B cell (primary cell): ENCODE measurements at regions of chr2 and their contacts with region 1.

Region 1: DNA sequence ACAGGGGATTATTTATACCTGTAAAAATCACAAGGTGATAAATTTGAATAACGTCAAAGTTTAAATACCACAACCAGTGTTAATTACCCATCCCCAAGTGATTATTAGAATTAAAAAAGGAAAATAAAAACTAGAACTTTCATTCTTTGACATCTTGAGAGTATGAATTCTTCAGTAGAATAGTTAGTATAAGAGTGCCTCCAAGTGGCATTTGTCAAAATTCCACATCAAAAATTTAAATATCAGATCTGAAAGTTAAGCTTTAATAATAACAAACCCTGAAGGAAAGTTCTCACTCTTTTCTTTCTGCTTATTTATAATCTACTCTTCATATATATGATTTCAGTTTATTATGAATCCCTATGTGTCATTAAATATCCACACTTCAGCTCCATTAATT is 273.7 kb upstream of the KYNU start:
- DNase-seq: no peak
- ATAC-seq: no peak
- H3K4me3 ChIP-seq: no peak overlapping the region
- H3K4me3 Mint-ChIP-seq: no peak overlapping the region
- H3K27ac ChIP-seq: no peak overlapping the region
- H3K27ac Mint-ChIP-seq: no peak overlapping the region
- H3K4me1 ChIP-seq: no peaks in the 10 kb centered on the region
- H3K4me1 Mint-ChIP-seq: no peaks in the 10 kb centered on the region
- H3K27me3 ChIP-seq: no peaks in the 10 kb centered on the region
- H3K27me3 Mint-ChIP-seq: peaks cover 10% of the 10 kb centered on the region
- CTCF ChIP-seq: no peak

Region 2: GRCh38 chr2:142615876-142616275 is 12.1 kb after region 1 on chr2:
- CTCF ChIA-PET with region 1: no interaction called
- POLR2A ChIA-PET with region 1: no interaction called
- intact Hi-C with region 1: no loop called
- DNase-seq: no peak
- ATAC-seq: no peak
- H3K4me3 ChIP-seq: no peak overlapping the region
- H3K4me3 Mint-ChIP-seq: no peak overlapping the region
- H3K27ac ChIP-seq: no peak overlapping the region
- H3K27ac Mint-ChIP-seq: no peak overlapping the region
- H3K4me1 ChIP-seq: no peaks in the 10 kb centered on the region
- H3K4me1 Mint-ChIP-seq: no peaks in the 10 kb centered on the region
- H3K27me3 ChIP-seq: peaks cover 0 to 5% (median 0%) of the 10 kb centered on the region in 4 experiments
- H3K27me3 Mint-ChIP-seq: peaks cover 10% of the 10 kb centered on the region
- CTCF ChIP-seq: no peak

Region 3: DNA sequence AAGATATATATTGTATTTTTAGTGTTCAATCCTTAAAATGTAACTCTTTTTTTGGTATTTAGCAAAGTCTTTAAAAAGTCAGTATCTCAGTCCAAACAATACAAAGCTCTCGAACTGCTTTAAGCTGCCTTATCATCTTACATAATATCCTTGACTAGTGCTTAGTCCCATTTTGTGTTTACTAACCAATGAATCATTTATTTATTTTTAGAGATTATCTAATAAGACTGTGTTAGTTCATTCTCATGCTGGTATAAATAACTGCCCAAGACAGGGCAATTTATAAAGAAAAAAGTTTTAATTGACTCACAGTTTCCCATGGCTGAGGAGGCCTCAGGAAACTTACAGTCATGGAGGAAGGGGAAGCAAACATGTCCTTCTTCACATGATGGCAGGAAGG is 25.4 kb after region 1 on chr2:
- CTCF ChIA-PET with region 1: no interaction called
- POLR2A ChIA-PET with region 1: no interaction called
- intact Hi-C with region 1: loop called (anchors 1 kb)
- DNase-seq: no peak
- ATAC-seq: no peak
- H3K4me3 ChIP-seq: no peak overlapping the region
- H3K4me3 Mint-ChIP-seq: no peak overlapping the region
- H3K27ac ChIP-seq: no peak overlapping the region
- H3K27ac Mint-ChIP-seq: no peak overlapping the region
- H3K4me1 ChIP-seq: no peaks in the 10 kb centered on the region
- H3K4me1 Mint-ChIP-seq: no peaks in the 10 kb centered on the region
- H3K27me3 ChIP-seq: no peaks in the 10 kb centered on the region
- H3K27me3 Mint-ChIP-seq: peaks cover 10% of the 10 kb centered on the region
- CTCF ChIP-seq: no peak